ENCODE measurements at regions of chr7 and their contacts with region 1.

Region 1: GRCh38 chr7:23546897-23547572 is 15.3 kb upstream of the TRA2A start:
- DNase-seq: peak; percentile 67
- ATAC-seq: peak; percentile 82

Region 2: DNA sequence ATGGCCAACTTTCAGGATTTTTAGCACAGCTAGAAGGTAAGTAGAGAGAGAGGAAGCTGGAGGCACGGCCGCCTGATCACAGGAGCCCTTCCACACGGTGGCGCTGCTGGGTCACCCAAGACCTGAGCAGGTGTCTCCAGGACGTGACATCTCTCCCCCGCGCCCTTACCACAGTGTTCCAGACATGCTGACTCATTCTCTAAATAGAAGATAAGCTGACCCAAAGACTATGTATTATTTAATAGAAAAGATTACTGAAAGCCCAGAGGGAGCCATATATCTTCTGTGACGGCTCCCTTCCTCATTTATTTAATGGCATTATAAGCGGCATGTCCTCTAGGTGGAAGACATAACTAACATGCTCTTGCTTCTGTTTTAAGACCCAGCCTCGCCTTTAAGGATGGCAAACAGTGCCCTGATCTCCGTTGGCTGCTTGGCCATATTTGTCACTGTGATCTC is 273.9 kb before region 1 on chr7:
- intact Hi-C with region 1: loop called (anchors 10 kb)
- DNase-seq: peak; percentile 90
- ATAC-seq: peak; percentile 88

Region 3: GRCh38 chr7:23514755-23515154 is 32.3 kb before region 1 on chr7:
- intact Hi-C with region 1: no loop called
- DNase-seq: no peak
- ATAC-seq: no peak

Region 4: DNA sequence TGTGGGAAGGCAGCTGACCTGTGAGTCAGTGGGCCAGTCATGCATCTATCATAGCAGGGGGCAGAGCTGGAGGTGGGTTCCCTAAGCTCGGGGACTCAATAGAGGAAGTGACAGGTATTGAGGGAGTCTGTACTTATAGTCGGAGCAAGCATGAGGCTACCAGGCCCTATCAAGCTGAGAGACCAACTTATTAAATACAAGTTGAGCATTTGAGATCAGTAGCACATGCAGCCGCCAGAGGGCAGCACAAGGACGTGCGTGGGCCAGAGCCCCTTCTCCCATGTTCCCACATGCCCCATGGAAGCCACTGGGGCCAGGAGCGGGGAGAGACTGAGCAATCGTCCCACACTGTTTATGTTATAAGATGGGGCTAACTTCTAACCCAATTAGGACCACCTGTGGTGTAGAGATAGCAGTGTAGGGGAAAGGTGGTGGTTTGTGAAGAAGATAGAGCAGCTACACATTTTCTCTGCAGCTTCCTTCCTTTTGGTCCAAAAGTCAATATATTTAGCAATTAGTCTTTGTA is 149.9 kb after region 1 on chr7:
- intact Hi-C with region 1: no loop called
- DNase-seq: no peak
- ATAC-seq: no peak

Region 5: DNA sequence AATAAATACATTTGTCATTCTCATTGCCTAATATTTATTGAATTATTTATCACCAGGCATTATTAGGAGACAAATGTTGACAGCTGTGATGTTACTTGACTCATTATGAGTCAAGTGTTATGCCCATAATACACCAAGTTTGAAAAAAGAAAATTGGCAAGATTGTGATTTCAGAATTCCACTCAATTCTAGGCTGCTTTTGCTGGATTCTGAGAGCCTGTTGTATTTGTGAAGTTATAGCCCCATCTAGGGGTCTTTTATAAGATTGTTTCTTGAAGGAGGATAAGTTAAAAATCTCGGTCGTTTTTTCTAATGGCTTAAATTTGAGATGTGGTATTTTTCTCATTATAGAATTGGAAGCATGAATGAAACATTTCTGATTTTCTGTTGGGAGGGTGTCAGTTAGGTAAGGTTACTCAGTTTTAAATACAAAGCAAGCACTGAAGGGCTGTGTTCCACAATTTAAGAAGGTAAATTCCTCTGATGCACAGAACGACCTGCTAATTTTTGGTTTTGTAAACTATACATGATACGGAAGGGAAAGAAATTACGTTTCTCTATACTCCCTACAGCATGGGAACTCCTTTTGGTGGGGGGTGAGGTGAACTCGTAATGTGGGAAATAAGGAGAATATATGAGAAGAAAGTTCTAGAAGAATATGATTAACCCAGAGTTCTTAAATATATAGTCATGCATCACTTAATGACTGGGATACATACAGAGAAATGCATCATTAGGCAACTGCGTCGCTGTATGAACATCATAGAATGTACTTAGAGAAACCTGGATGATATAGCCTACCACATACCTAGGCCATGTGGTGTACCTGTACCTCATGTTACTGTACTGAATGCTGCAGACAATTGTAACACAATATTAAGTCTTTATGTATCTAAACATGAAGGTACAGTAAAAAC is 165.6 kb after region 1 on chr7:
- intact Hi-C with region 1: loop called (anchors 1 kb)
- DNase-seq: no peak
- ATAC-seq: no peak

Region 6: GRCh38 chr7:24059495-24060174 is 512.6 kb after region 1 on chr7:
- intact Hi-C with region 1: no loop called
- DNase-seq: no peak
- ATAC-seq: no peak

Measured in Right ventricle myocardium inferior (tissue), 1 donor.